ENCODE measurements at regions of chr7 and their contacts with region 1.

Region 1: DNA sequence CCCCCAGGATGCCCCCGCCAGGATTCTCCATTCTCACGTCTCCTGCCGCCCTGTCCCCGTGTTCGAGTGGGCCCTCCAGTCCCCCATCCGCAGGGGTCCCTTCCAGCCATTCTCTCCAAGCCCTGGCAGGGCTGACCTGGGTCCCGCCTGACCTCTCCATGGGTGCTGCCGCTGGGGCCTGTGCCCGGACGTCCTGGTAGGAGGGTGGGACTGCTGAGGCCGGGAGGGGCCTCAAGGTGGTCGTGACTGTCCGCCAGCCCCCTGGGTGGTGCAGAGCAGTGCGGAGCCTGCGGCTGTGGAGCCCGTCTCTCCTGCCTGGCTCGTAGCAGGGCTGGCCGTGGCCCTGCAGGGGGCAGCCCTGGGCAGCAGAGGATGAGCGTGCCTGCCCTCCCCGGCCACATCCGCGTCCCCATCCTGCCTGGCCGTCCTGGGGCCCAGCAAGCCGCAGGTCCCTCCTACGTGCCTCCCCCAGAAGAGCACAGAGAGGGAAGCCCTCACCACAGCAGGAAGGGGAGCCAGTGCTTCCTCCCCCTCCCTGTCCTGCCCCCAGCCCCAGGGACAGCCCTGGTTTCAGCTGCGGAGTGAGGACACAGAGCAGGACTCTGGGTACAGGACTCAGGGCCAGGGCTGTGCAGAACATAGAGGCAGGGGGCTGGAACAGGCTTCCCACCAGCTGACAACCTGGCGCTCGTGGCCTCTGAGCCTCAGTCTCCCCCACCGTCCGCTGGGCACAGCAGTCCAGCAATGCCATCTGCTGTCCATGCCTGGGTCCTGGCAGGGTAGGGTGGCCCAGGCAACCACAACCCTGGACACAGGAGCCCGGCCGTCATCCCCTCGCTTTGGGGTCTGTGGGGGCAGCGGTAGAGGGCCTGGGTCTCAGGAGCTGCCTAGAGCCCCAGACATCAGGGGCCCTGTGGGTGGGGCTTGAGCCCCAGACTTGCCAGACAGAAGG is 1.5 kb upstream of the GRIFIN start:
- DNase-seq: peak; percentile 93
- H3K4me3 ChIP-seq: peak overlapping the region in 1 of 8 donors; percentile 49
- H3K27ac ChIP-seq: no peak overlapping the region
- H3K4me1 ChIP-seq: peaks cover 13 to 34% (median 16%) of the 10 kb centered on the region in 6 donors
- H3K27me3 ChIP-seq: peaks cover 0 to 53% (median 0%) of the 10 kb centered on the region in 7 donors
- CTCF ChIP-seq: peak; percentile 85 to 94 (median 89)
- POLR2A ChIP-seq: no peak

Region 2: GRCh38 chr7:2572101-2572842 is 94.5 kb after region 1 on chr7:
- intact Hi-C with region 1: loop called (anchors 10 kb)
- DNase-seq: peak; percentile 70
- H3K4me3 ChIP-seq: no peak overlapping the region
- H3K27ac ChIP-seq: no peak overlapping the region
- H3K4me1 ChIP-seq: peaks cover 0 to 17% (median 11%) of the 10 kb centered on the region in 6 donors
- H3K27me3 ChIP-seq: no peaks in the 10 kb centered on the region
- CTCF ChIP-seq: no peak
- POLR2A ChIP-seq: no peak

Region 3: GRCh38 chr7:2680792-2681490 is 203.2 kb after region 1 on chr7:
- intact Hi-C with region 1: loop called (anchors 10 kb)
- DNase-seq: peak; percentile 91
- H3K4me3 ChIP-seq: no peak overlapping the region
- H3K27ac ChIP-seq: no peak overlapping the region
- H3K4me1 ChIP-seq: peaks cover 0 to 21% (median 4%) of the 10 kb centered on the region in 6 donors
- H3K27me3 ChIP-seq: peaks cover 0 to 55% (median 3%) of the 10 kb centered on the region in 7 donors
- CTCF ChIP-seq: peak; percentile 30 to 84 (median 69)
- POLR2A ChIP-seq: no peak

Measured in spleen (tissue), 13 donors.